Activated CD4-positive, alpha-beta T cell treated with anti-CD3 and anti-CD28 coated beads for 36 hours (primary cell): ENCODE measurements at regions of chr21 and their contacts with region 1.

Region 1: DNA sequence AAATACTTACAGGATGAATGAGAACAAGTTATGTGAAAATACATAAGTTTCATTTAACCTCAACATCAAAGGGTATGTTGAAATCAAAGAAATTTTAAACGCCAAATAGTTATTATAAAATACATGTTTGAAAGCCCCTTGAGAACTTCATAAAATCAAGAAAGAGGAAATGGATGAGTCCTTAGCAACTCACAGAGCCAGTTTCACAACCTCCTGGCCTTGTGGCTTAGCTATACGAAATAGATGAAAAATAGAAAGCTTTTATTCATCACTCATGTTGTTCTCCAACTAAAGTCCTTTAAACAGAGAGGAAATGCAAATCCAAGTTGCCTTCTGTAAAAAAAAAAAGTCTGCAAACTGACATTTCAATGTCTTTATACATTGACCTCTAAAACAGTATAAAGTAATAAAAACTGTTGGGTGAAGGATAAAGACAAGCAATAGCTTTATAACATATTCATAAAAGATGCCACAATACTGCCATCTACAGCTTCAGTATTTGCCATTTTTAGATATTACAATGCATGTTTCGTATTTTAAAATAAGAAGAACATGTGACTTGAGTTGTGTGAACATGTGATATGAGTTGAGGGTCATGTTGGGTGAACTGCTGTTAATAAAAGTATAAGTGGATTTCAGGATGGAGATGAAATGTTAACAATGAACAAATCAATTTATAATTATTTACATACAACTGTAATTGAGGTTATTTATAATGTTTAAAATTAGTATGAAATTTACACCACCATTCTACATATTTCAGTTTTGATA is 847.7 kb downstream of the MRPL39 start:
- DNase-seq: no peak
- ATAC-seq: no peak
- H3K4me3 Mint-ChIP-seq: no peak overlapping the region
- H3K27ac Mint-ChIP-seq: no peak overlapping the region
- H3K4me1 Mint-ChIP-seq: no peaks in the 10 kb centered on the region
- H3K27me3 Mint-ChIP-seq: no peaks in the 10 kb centered on the region

Region 2: GRCh38 chr21:24829397-24829796 is 69.9 kb after region 1 on chr21:
- CTCF ChIA-PET with region 1: no interaction called
- POLR2A ChIA-PET with region 1: no interaction called
- intact Hi-C with region 1: loop called in 1 of 2 experiments (anchors 10 kb)
- DNase-seq: no peak
- ATAC-seq: no peak
- H3K4me3 Mint-ChIP-seq: no peak overlapping the region
- H3K27ac Mint-ChIP-seq: no peak overlapping the region
- H3K4me1 Mint-ChIP-seq: no peaks in the 10 kb centered on the region
- H3K27me3 Mint-ChIP-seq: no peaks in the 10 kb centered on the region